ENCODE measurements at regions of chr4 and their contacts with region 1.

Region 1: DNA sequence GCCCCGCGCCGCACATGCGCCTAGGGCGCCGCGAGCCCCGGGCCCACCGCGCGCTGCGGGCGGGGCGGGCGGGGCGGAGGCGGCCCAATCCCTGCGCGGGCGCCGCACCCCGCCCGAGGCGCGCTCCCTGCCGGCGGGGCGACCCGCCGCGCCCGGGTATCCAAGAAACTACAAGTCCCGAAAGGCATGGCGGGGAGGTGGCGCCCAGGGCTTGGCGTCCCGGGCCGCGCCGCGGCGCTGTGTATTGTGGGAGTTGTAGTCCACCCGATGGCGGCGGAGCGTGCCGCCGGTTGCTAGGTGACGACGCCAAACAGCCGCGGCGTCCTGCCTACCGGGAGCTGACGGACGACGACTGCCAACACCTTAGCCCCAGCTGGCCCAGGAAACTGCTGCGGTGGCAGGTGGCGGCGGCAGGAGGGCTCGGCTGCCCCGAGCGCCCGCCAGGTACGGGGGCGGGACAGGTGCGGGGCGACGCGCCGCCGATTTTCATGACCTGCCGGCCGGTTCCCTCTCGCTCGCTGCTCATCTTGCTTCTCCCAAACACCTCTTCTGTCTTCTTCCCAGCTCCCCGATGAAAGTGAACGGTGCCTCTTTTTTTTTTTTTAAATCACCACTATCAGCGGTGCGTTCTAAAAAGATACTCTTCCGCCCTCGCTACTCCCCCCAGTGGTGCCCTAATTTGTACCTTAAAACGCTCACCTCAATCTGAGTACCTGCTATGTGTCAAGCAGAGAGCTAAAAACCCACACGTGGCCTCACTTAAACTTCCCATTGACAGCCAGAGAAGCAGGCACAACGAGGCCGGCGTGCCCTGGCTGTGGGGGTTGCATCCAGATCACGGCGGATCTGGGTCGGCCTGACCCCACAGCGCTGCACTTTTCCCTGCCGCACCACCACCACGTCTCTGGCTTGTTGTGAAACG is at the start of gene CFAP99:
- DNase-seq: peak; percentile 93 to 95 (median 95)
- H3K4me3 ChIP-seq: peak within 1 kb of the TSS; percentile 48 to 76 (median 53)
- H3K4me3 Mint-ChIP-seq: peak within 1 kb of the TSS; percentile 91 to 95
- H3K27ac ChIP-seq: peak within 1 kb of the TSS; percentile 38 to 65
- H3K27ac Mint-ChIP-seq: peak within 1 kb of the TSS; percentile 75 to 97 (median 90)
- H3K4me1 ChIP-seq: peaks cover 39 to 49% of the 10 kb centered on the region in 2 donors
- H3K4me1 Mint-ChIP-seq: peaks cover 44% of the 10 kb centered on the region
- H3K27me3 ChIP-seq: peaks cover 16 to 41% of the 10 kb centered on the region in 2 donors
- H3K27me3 Mint-ChIP-seq: peaks cover 46 to 55% (median 50%) of the 10 kb centered on the region in 3 donors
- CTCF ChIP-seq: no peak
- polyA plus RNA-seq, gene CFAP99: 0.15 to 0.27 TPM in 2 of 3 donors, not detected in the other

Region 2: GRCh38 chr4:2262143-2262943 is 156.6 kb before region 1 on chr4:
- intact Hi-C with region 1: loop called (anchors 2 to 5 kb)
- DNase-seq: peak; percentile 98 to 99 (median 98)
- H3K4me3 ChIP-seq: peak overlapping the region; percentile 53 to 93 (median 65)
- H3K4me3 Mint-ChIP-seq: peak overlapping the region; percentile 74 to 83
- H3K27ac ChIP-seq: peak overlapping the region; percentile 86 to 87
- H3K27ac Mint-ChIP-seq: peak overlapping the region; percentile 65 to 87 (median 81)
- H3K4me1 ChIP-seq: peaks cover 22 to 25% of the 10 kb centered on the region in 2 donors
- H3K4me1 Mint-ChIP-seq: peaks cover 15% of the 10 kb centered on the region
- H3K27me3 ChIP-seq: no peaks in the 10 kb centered on the region
- H3K27me3 Mint-ChIP-seq: peaks cover 0 to 3% (median 0%) of the 10 kb centered on the region in 3 donors
- CTCF ChIP-seq: no peak

Region 3: DNA sequence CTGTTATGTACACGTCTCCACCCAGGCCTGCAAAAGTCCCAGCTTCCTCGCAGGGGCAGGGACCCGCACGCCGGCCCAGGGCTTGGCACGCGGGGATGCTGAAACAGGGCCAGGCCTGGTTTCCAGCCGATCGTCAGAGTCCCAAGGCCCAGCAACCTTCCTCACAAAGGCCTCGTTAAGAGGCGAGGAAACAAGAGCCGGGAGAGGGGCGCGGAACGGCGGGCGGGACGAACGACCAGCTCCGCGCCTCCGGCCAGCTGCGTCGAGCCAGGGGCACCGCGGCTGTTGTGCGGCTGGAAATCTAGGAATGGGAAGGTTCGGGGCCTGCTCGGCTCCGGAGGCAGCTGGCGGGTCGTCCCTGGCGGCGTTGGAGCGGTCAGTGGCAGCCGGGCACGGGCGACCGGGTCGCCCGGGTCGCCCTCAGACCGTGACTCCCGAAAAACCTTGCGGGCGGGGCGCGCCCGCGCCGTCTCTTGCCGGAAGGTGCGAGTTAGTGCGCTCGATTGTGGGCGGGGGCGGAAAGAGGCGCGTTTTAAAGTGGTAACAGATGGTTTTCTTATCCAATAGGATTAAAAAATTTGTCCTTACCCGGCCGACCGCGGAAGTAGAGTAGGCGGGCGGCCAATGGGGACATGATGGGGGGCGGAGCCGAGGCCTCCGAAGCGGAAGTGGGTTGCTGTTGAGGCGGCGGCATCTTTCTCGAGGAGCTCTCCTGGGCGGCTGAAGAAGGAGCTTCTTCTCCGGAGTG is 49.7 kb after region 1 on chr4 and contains the start of gene RNF4:
- intact Hi-C with region 1: loop called (anchors 2 to 5 kb)
- DNase-seq: peak; percentile 95
- H3K4me3 ChIP-seq: peak within 1 kb of the TSS; percentile 80 to 97 (median 83)
- H3K4me3 Mint-ChIP-seq: peak within 1 kb of the TSS; percentile 92 to 96
- H3K27ac ChIP-seq: peak within 1 kb of the TSS; percentile 84 to 91
- H3K27ac Mint-ChIP-seq: peak within 1 kb of the TSS; percentile 91 to 97 (median 93)
- H3K4me1 ChIP-seq: peaks cover 14 to 29% of the 10 kb centered on the region in 2 donors
- H3K4me1 Mint-ChIP-seq: peaks cover 35% of the 10 kb centered on the region
- H3K27me3 ChIP-seq: peaks cover 2 to 4% of the 10 kb centered on the region in 2 donors
- H3K27me3 Mint-ChIP-seq: peaks cover 4 to 10% (median 9%) of the 10 kb centered on the region in 3 donors
- CTCF ChIP-seq: no peak
- polyA plus RNA-seq, gene RNF4: 28.8 to 41.3 (median 37.0) TPM

Region 4: GRCh38 chr4:2536193-2537010 is 117.5 kb after region 1 on chr4 and contains the start of gene FAM193A:
- intact Hi-C with region 1: loop called in 1 of 2 experiments (anchors 5 kb)
- DNase-seq: peak; percentile 97 to 100 (median 99)
- H3K4me3 ChIP-seq: peak within 1 kb of the TSS; percentile 83 to 93 (median 83)
- H3K4me3 Mint-ChIP-seq: peak within 1 kb of the TSS; percentile 90 to 95
- H3K27ac ChIP-seq: peak within 1 kb of the TSS; percentile 89 to 98
- H3K27ac Mint-ChIP-seq: peak within 1 kb of the TSS; percentile 90 to 98 (median 96)
- H3K4me1 ChIP-seq: peaks cover 19 to 23% of the 10 kb centered on the region in 2 donors
- H3K4me1 Mint-ChIP-seq: peaks cover 23% of the 10 kb centered on the region
- H3K27me3 ChIP-seq: no peaks in the 10 kb centered on the region
- H3K27me3 Mint-ChIP-seq: peaks cover 1 to 2% (median 1%) of the 10 kb centered on the region in 3 donors
- CTCF ChIP-seq: no peak
- polyA plus RNA-seq, gene FAM193A: 0.66 to 11.8 (median 0.82) TPM

Measured in CD14-positive monocyte (primary cell).